CD4-positive, alpha-beta memory T cell (primary cell): ENCODE measurements at regions of chr10 and their contacts with region 1.

Region 1: GRCh38 chr10:5873515-5873995 is 16.1 kb downstream of the ANKRD16 start:
- DNase-seq: peak; percentile 57 to 75 (median 63)
- H3K4me3 ChIP-seq: no peak overlapping the region
- H3K4me3 Mint-ChIP-seq: peak overlapping the region in 2 of 8 donors; percentile 26 to 60
- H3K27ac ChIP-seq: no peak overlapping the region
- H3K27ac Mint-ChIP-seq: peak overlapping the region in 3 of 7 donors; percentile 18 to 63 (median 33)
- H3K4me1 ChIP-seq: no peaks in the 10 kb centered on the region
- H3K4me1 Mint-ChIP-seq: peaks cover 3 to 6% (median 4%) of the 10 kb centered on the region in 4 donors
- H3K27me3 ChIP-seq: no peaks in the 10 kb centered on the region
- H3K27me3 Mint-ChIP-seq: no peaks in the 10 kb centered on the region

Region 2: GRCh38 chr10:5446390-5446926 is 427.1 kb before region 1 on chr10:
- CTCF ChIA-PET with region 1: interaction called, 9 read pairs
- POLR2A ChIA-PET with region 1: no interaction called
- intact Hi-C with region 1: loop called (anchors 2 kb)
- DNase-seq: peak; percentile 46 to 72 (median 56)
- H3K4me3 ChIP-seq: peak overlapping the region in 1 of 2 donors; percentile 10
- H3K4me3 Mint-ChIP-seq: peak overlapping the region; percentile 81 to 90 (median 86)
- H3K27ac ChIP-seq: no peak overlapping the region
- H3K27ac Mint-ChIP-seq: peak overlapping the region; percentile 45 to 93 (median 85)
- H3K4me1 ChIP-seq: peaks cover 23% of the 10 kb centered on the region
- H3K4me1 Mint-ChIP-seq: peaks cover 13 to 40% (median 27%) of the 10 kb centered on the region in 4 donors
- H3K27me3 ChIP-seq: no peaks in the 10 kb centered on the region
- H3K27me3 Mint-ChIP-seq: no peaks in the 10 kb centered on the region

Region 3: GRCh38 chr10:5629303-5630111 is 244.0 kb before region 1 on chr10:
- CTCF ChIA-PET with region 1: interaction called, 51 read pairs
- POLR2A ChIA-PET with region 1: no interaction called
- intact Hi-C with region 1: loop called (anchors 1 kb)
- DNase-seq: peak; percentile 76 to 83 (median 79)
- H3K4me3 ChIP-seq: no peak overlapping the region
- H3K4me3 Mint-ChIP-seq: peak overlapping the region in 6 of 8 donors; percentile 34 to 73 (median 52)
- H3K27ac ChIP-seq: no peak overlapping the region
- H3K27ac Mint-ChIP-seq: peak overlapping the region in 2 of 7 donors; percentile 32 to 76
- H3K4me1 ChIP-seq: peaks cover 11% of the 10 kb centered on the region
- H3K4me1 Mint-ChIP-seq: peaks cover 9 to 17% (median 12%) of the 10 kb centered on the region in 4 donors
- H3K27me3 ChIP-seq: no peaks in the 10 kb centered on the region
- H3K27me3 Mint-ChIP-seq: peaks cover 3 to 4% of the 10 kb centered on the region in 2 donors

Region 4: DNA sequence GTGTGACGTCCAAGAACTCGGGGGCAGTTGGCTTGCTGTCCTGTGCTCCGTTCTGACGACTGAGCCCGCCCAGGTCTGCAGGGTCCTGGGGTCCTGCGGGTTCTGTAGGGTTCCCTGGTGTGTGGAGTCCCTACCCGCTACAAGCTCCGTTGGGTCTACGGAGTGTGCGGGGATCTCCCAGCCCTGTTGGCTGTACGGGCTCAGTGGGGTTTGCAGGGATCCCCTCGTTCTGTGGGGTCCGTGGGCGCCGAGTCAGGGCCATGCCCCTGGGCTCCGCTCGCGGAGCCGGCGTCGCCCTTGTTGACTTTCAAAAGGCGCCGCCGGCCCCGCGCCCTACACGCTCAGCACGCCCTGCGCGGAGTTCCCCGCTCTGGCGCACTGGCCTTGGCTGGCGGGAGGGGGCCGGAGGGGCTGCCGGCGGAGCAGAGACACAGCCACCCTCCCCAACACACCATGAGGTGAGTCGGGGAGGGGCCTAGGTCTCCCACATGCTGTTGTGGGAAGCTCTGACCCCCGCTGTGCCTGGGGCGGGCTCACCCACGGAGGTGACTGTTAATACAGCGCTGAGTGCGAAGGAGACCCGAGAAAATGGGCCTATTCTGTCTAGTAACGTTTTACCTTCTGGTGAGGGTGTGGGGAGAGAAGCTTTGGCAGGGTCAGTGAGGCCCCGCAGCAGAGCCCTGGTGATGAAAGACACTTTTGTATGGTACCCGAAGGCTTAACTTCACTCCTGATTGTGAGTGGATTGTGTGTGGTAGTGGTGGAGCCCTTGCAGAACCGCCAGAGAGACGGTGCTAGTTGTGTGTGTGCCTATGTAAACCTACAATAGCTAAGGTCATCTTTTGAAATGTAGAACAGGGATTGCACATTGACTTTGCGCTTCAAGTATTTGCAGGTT is 180.8 kb before region 1 on chr10:
- CTCF ChIA-PET with region 1: interaction called, 4 read pairs
- POLR2A ChIA-PET with region 1: interaction called, 3 read pairs
- intact Hi-C with region 1: loop called (anchors 2 kb)
- DNase-seq: peak; percentile 47 to 80 (median 53)
- H3K4me3 ChIP-seq: peak overlapping the region in 1 of 2 donors; percentile 51
- H3K4me3 Mint-ChIP-seq: peak overlapping the region; percentile 63 to 91 (median 76)
- H3K27ac ChIP-seq: peak overlapping the region; percentile 22
- H3K27ac Mint-ChIP-seq: peak overlapping the region; percentile 9 to 77 (median 64)
- H3K4me1 ChIP-seq: peaks cover 80% of the 10 kb centered on the region
- H3K4me1 Mint-ChIP-seq: peaks cover 45 to 90% (median 68%) of the 10 kb centered on the region in 4 donors
- H3K27me3 ChIP-seq: no peaks in the 10 kb centered on the region
- H3K27me3 Mint-ChIP-seq: no peaks in the 10 kb centered on the region

Region 5: GRCh38 chr10:5737352-5737751 is 136.2 kb before region 1 on chr10:
- CTCF ChIA-PET with region 1: no interaction called
- POLR2A ChIA-PET with region 1: no interaction called
- intact Hi-C with region 1: loop called (anchors 5 kb)
- DNase-seq: peak in 1 of 5 donors; percentile 7
- H3K4me3 ChIP-seq: no peak overlapping the region
- H3K4me3 Mint-ChIP-seq: no peak overlapping the region
- H3K27ac ChIP-seq: no peak overlapping the region
- H3K27ac Mint-ChIP-seq: peak overlapping the region in 4 of 7 donors; percentile 44 to 90 (median 67)
- H3K4me1 ChIP-seq: no peaks in the 10 kb centered on the region
- H3K4me1 Mint-ChIP-seq: peaks cover 3 to 26% (median 15%) of the 10 kb centered on the region in 4 donors
- H3K27me3 ChIP-seq: no peaks in the 10 kb centered on the region
- H3K27me3 Mint-ChIP-seq: no peaks in the 10 kb centered on the region